HCT116 (cell line): ENCODE measurements at regions of chr7 and their contacts with region 1.

Region 1: GRCh38 chr7:126210707-126211106 is 1042.0 kb downstream of the GRM8 start:
- DNase-seq: no peak
- ATAC-seq: no peak
- H3K4me3 ChIP-seq: no peak overlapping the region
- H3K27ac ChIP-seq: no peak overlapping the region
- H3K4me1 ChIP-seq: no peaks in the 10 kb centered on the region
- H3K27me3 ChIP-seq: no peaks in the 10 kb centered on the region
- CTCF ChIP-seq: no peak
- POLR2A ChIP-seq: no peak
- RAD21 ChIP-seq: no peak

Region 2: GRCh38 chr7:125892434-125892833 is 318.3 kb before region 1 on chr7:
- CTCF ChIA-PET with region 1: no interaction called
- POLR2A ChIA-PET with region 1: no interaction called
- RAD21 ChIA-PET with region 1: no interaction called
- intact Hi-C with region 1: no loop called
- DNase-seq: no peak
- ATAC-seq: no peak
- H3K4me3 ChIP-seq: no peak overlapping the region
- H3K27ac ChIP-seq: no peak overlapping the region
- H3K4me1 ChIP-seq: no peaks in the 10 kb centered on the region
- H3K27me3 ChIP-seq: no peaks in the 10 kb centered on the region
- CTCF ChIP-seq: no peak
- POLR2A ChIP-seq: no peak
- RAD21 ChIP-seq: no peak

Region 3: GRCh38 chr7:126254297-126254696 is 43.6 kb after region 1 on chr7:
- CTCF ChIA-PET with region 1: no interaction called
- POLR2A ChIA-PET with region 1: no interaction called
- RAD21 ChIA-PET with region 1: no interaction called
- intact Hi-C with region 1: loop called (anchors 1 kb)
- DNase-seq: no peak
- ATAC-seq: no peak
- H3K4me3 ChIP-seq: no peak overlapping the region
- H3K27ac ChIP-seq: no peak overlapping the region
- H3K4me1 ChIP-seq: no peaks in the 10 kb centered on the region
- H3K27me3 ChIP-seq: no peaks in the 10 kb centered on the region
- CTCF ChIP-seq: no peak
- POLR2A ChIP-seq: no peak
- RAD21 ChIP-seq: no peak